ENCODE measurements at regions of chr17 and their contacts with region 1.

Region 1: GRCh38 chr17:27106347-27106981 is 187.4 kb upstream of the WSB1 start:
- DNase-seq: no peak
- ATAC-seq: no peak
- H3K4me3 ChIP-seq: no peak overlapping the region
- H3K27ac ChIP-seq: no peak overlapping the region
- H3K4me1 ChIP-seq: no peaks in the 10 kb centered on the region
- H3K27me3 ChIP-seq: no peaks in the 10 kb centered on the region
- CTCF ChIP-seq: no peak
- EP300 ChIP-seq: no peak
- POLR2A ChIP-seq: no peak
- RAD21 ChIP-seq: no peak

Region 2: DNA sequence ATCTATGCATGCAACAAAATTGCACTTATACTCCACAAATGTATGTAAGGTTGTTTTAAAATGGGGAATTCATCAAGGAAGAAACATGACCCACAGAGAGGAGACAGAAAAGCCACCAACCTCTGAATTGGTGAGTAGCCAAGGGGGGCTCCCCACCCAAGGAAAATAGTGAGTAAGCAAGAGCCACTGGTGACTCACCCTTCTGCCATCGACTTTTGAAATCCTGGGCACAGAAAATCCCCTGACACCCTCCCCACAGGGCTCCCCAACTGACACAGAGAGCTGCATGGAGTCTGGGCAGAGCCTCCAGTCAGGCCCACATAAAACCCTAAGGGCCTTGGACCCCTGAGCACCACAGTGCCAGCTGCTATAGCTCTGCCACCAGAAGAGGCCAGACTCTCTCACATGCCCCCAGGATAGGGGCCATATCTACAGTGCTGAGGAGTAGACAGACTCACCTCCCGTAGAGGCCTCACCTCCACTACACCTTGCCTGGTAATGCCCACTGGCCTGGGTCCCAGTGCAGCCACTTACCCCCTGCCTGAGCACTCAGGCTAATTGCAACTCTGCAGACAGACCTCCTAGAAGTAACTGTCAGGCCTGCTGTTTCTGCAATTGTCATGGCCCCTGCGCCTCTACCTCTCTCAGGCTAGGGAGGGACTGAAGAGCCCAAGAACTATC is 57.2 kb before region 1 on chr17:
- CTCF ChIA-PET with region 1: no interaction called
- POLR2A ChIA-PET with region 1: no interaction called
- RAD21 ChIA-PET with region 1: no interaction called
- SMC1A ChIA-PET with region 1: no interaction called
- in situ Hi-C with region 1: loop called (anchors 10 kb)
- intact Hi-C with region 1: no loop called
- DNase-seq: no peak
- ATAC-seq: no peak
- H3K4me3 ChIP-seq: no peak overlapping the region
- H3K27ac ChIP-seq: no peak overlapping the region
- H3K4me1 ChIP-seq: no peaks in the 10 kb centered on the region
- H3K27me3 ChIP-seq: no peaks in the 10 kb centered on the region
- CTCF ChIP-seq: no peak
- EP300 ChIP-seq: no peak
- POLR2A ChIP-seq: no peak
- RAD21 ChIP-seq: no peak

Region 3: GRCh38 chr17:27091043-27091497 is 15.4 kb before region 1 on chr17:
- CTCF ChIA-PET with region 1: no interaction called
- POLR2A ChIA-PET with region 1: no interaction called
- RAD21 ChIA-PET with region 1: no interaction called
- SMC1A ChIA-PET with region 1: no interaction called
- in situ Hi-C with region 1: no loop called
- intact Hi-C with region 1: no loop called
- DNase-seq: no peak
- ATAC-seq: no peak
- H3K4me3 ChIP-seq: no peak overlapping the region
- H3K27ac ChIP-seq: no peak overlapping the region
- H3K4me1 ChIP-seq: no peaks in the 10 kb centered on the region
- H3K27me3 ChIP-seq: no peaks in the 10 kb centered on the region
- CTCF ChIP-seq: no peak
- EP300 ChIP-seq: no peak
- POLR2A ChIP-seq: no peak
- RAD21 ChIP-seq: no peak